ENCODE measurements at regions of chr3 and their contacts with region 1.

Region 1: DNA sequence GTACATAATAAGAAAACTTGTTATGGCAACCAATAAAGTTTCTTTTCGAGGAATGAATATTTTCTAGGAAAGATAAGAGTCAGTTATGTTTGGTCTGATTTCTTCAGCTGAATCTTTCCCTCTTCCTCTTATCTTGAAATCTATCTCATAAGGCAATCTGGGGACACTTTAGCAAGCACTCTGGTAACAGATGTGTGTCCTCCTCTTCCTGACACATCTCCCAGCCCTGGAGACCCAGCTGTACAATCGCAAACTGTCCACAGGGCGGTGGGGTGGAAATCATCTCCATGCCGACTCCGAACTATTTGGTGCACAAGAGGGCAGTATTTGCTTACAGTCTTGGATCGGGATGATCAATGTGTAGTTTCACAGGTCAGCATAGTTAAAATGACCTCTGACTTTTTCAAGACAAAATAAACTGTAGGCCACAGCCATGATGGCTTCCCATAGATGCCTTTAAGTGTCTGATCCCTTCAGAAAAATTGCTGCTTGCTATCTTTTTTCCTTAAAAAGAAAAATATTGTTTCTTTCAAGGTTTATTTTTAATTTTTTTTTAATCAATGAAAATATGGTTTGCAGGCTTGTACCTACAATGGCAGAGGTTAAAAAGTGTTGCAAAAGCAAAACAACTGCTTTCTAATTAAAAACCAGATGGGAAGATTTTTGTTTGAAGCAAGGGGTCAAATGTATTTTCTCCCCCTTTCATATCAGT is 17.7 kb downstream of the EEFSEC start:
- DNase-seq: peak; percentile 36
- ATAC-seq: peak; percentile 93
- H3K4me3 ChIP-seq: no peak overlapping the region
- H3K27ac ChIP-seq: no peak overlapping the region; the same call in 1 of the 2 replicates
- H3K4me1 ChIP-seq: peaks cover 13% of the 10 kb centered on the region
- H3K27me3 ChIP-seq: no peaks in the 10 kb centered on the region
- CTCF ChIP-seq: peak; percentile 90

Region 2: GRCh38 chr3:127226946-127227842 is 943.8 kb before region 1 on chr3:
- CTCF ChIA-PET with region 1: no interaction called
- POLR2A ChIA-PET with region 1: no interaction called
- in situ Hi-C with region 1: no loop called
- intact Hi-C with region 1: no loop called
- DNase-seq: no peak
- ATAC-seq: peak; percentile 61
- H3K4me3 ChIP-seq: no peak overlapping the region
- H3K27ac ChIP-seq: no peak overlapping the region
- H3K4me1 ChIP-seq: no peaks in the 10 kb centered on the region
- H3K27me3 ChIP-seq: peaks cover 7% of the 10 kb centered on the region
- CTCF ChIP-seq: no peak

Region 3: DNA sequence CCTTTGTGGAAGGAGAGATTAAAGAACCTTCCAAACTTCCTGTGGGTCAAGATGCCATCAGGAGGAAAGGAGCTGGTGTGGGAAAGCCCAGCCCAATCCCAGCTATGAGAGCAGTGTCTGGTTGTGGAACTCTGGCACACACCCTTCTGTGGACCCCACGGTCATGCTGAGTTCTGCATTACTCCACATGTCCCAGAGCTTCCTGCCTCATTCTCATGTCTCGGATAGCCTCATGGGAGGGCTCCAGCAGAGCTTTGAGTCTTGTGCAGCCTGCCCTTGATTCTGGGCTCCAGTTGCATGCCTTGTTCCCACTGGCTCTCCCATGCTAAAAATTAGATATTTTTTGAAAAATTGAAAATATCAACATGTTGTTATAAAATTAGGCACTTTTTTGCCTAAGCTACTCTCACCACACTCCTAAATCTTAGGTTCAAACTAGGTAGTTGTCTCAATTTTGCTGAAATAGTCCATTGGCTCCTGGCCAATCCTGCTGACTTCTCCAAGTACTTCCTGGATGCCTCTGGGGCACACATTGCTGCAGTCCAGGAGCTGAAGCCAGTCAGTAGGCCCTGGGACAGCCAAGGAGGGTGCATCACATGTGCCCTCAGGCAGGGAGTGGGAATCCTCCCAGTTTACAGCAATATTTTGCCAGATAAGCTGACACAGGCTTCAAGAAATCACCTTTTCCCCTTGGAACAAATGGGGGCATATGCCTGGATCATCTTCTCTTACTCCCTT is 126.6 kb after region 1 on chr3:
- CTCF ChIA-PET with region 1: no interaction called
- POLR2A ChIA-PET with region 1: no interaction called
- in situ Hi-C with region 1: no loop called
- intact Hi-C with region 1: loop called (anchors 10 kb)
- DNase-seq: no peak
- ATAC-seq: no peak
- H3K4me3 ChIP-seq: no peak overlapping the region
- H3K27ac ChIP-seq: no peak overlapping the region
- H3K4me1 ChIP-seq: no peaks in the 10 kb centered on the region
- H3K27me3 ChIP-seq: no peaks in the 10 kb centered on the region
- CTCF ChIP-seq: no peak

Region 4: DNA sequence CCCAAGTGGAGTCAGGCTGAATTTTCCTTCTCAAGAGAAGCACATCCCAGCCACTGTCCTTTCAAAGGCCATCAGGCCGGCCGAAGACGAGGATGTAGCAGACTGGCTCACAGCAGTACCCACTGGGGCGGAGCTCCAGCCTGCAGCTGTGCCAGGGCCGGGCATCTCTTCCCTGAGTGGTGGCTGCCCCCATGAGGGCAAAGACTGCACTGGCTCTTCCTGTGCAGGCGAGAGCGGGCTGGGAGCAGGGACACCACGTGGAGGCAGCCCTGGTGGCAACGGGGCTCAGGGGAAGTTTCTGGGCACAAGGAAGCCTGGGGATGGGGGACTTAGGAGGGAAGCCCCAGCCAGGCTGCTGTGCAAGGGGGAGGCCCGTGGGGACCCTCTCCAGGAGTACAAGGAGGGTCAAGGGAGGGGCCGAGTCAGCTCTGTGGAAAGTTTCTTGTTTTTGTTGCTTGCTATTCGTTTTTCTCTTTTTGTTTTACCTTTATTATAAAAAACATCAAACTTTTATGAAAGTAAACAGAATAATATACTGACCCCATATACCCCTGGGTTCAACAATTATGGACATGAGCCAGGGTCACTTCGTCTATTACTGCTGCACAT is 413.6 kb after region 1 on chr3:
- CTCF ChIA-PET with region 1: no interaction called
- POLR2A ChIA-PET with region 1: no interaction called
- in situ Hi-C with region 1: no loop called
- intact Hi-C with region 1: loop called (anchors 10 kb)
- DNase-seq: no peak
- ATAC-seq: peak; percentile 100
- H3K4me3 ChIP-seq: peak overlapping the region in 1 of 2 experiments; percentile 29; a peak in 1 of 4 replicates
- H3K27ac ChIP-seq: peak overlapping the region; percentile 31; the same call in 1 of the 2 replicates
- H3K4me1 ChIP-seq: peaks cover 7% of the 10 kb centered on the region; the same call in 1 of the 2 replicates
- H3K27me3 ChIP-seq: no peaks in the 10 kb centered on the region
- CTCF ChIP-seq: peak; percentile 95